CD4-positive, alpha-beta T cell (primary cell): ENCODE measurements at regions of chr14 and their contacts with region 1.

Region 1: DNA sequence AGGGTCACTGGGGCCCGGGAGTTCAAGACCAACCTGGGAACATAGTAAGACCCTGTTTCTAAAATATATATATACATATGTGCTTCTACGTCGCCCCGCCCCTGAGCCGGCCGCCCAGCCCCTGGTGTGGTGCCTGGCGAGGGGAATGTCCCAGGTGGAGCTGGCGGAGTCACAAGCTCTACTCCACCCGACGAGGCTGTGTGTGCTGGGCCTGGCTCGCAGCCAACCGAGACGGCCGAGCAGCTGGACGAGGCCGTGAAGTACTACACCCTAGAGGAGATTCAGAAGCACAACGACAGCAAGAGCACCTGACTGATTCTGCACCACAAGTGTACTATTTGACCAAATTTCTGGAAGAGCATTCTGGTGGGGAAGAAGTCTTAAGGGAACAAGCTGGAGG is 22.1 kb upstream of the ITPK1 start:
- DNase-seq: no peak
- ATAC-seq: no peak
- H3K4me3 ChIP-seq: no peak overlapping the region
- H3K4me3 Mint-ChIP-seq: no peak overlapping the region
- H3K27ac ChIP-seq: no peak overlapping the region
- H3K27ac Mint-ChIP-seq: no peak overlapping the region
- H3K4me1 ChIP-seq: no peaks in the 10 kb centered on the region
- H3K4me1 Mint-ChIP-seq: peaks cover 6% of the 10 kb centered on the region
- H3K27me3 ChIP-seq: no peaks in the 10 kb centered on the region
- H3K27me3 Mint-ChIP-seq: no peaks in the 10 kb centered on the region
- CTCF ChIP-seq: no peak

Region 2: DNA sequence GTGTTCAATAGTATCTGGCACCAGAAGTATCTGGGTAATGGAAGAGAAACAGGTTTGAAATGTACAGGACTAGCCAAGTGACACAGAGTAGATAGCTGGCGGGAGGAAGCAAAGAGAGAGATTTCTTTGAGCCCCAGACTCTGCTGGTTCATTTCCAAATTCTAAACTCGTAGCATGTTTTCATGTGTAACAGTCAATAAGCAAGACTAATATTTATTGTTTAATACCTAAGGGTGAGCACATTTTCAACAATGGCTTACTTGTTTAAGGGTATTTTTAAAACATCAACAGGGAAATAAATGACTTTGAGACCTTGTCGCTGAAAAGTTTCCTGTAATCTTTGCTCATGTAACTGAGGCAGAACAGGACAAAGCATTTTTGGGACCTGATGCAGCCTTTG is 1708.5 kb before region 1 on chr14:
- CTCF ChIA-PET with region 1: no interaction called
- POLR2A ChIA-PET with region 1: no interaction called
- intact Hi-C with region 1: no loop called
- DNase-seq: no peak
- ATAC-seq: no peak
- H3K4me3 ChIP-seq: no peak overlapping the region
- H3K4me3 Mint-ChIP-seq: no peak overlapping the region
- H3K27ac ChIP-seq: no peak overlapping the region
- H3K27ac Mint-ChIP-seq: no peak overlapping the region
- H3K4me1 ChIP-seq: peaks cover 7% of the 10 kb centered on the region
- H3K4me1 Mint-ChIP-seq: peaks cover 22% of the 10 kb centered on the region
- H3K27me3 ChIP-seq: no peaks in the 10 kb centered on the region
- H3K27me3 Mint-ChIP-seq: no peaks in the 10 kb centered on the region
- CTCF ChIP-seq: no peak

Region 3: DNA sequence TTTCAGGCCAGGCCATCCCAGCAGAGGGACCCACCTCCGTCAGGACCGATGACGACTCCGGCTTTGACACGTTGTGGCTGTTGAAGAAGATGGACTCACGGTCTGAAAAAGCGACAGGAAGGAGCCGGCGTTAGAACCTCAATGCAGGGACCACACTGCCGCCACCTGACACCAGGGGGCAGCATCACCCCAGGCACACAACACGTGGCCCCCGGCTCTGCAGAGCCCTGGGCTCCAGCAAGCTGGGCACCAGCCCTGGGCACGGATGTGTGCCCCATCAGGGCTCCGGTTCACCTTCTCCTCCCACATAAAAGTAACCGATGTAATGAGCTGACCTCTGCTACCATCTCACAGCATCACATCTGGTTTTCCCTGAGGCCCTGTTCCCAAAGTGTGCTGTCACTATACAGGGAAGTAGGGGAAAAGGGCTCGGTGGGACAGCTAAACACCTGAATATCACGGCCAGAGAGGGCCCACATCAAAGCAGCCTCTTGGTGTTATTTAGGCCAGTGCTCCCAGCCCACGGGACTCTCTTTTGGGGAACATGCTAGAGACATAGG is 185.9 kb before region 1 on chr14:
- CTCF ChIA-PET with region 1: interaction called, 7 read pairs
- POLR2A ChIA-PET with region 1: no interaction called
- intact Hi-C with region 1: loop called in 1 of 2 experiments (anchors 1 kb)
- DNase-seq: peak; percentile 57 to 87 (median 76)
- ATAC-seq: peak; percentile 97
- H3K4me3 ChIP-seq: no peak overlapping the region
- H3K4me3 Mint-ChIP-seq: no peak overlapping the region
- H3K27ac ChIP-seq: no peak overlapping the region
- H3K27ac Mint-ChIP-seq: no peak overlapping the region
- H3K4me1 ChIP-seq: peaks cover 8% of the 10 kb centered on the region
- H3K4me1 Mint-ChIP-seq: peaks cover 4% of the 10 kb centered on the region
- H3K27me3 ChIP-seq: no peaks in the 10 kb centered on the region
- H3K27me3 Mint-ChIP-seq: no peaks in the 10 kb centered on the region
- CTCF ChIP-seq: peak; percentile 91

Region 4: DNA sequence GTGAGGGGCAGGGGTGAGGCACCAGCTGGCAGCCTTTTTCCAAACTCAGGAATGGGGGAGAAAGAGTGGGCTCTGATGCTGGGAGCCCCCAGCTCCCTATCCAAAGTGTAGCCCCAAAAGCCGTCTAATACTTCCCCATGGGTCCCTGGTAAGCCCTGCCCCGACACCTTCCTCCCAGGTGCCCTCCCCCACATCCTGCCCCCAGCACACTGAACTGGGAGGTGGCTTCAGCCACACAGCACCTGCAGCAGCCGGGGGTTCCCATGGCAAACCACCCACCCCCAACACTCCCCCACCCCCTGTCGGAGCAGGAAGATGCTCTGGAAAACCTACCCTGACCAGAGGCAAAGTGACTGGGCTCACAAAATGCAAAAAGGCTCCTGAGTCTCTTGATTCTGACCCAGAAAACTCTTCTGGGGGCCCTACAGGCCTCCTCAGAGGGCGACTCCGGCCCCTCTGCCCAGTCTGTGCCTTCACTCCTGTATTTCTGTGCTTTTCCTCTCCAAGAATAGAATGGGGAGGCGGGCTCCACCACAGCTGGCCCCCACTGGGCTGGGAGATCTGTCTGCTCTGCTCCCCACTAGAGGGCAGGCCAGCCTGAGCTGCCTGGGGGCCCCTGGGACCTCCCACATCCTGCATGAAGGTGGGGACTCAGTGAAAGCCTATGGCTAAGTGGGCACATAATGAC is 103.7 kb before region 1 on chr14:
- CTCF ChIA-PET with region 1: interaction called, 3 read pairs
- POLR2A ChIA-PET with region 1: no interaction called
- intact Hi-C with region 1: loop called in 1 of 2 experiments (anchors 2 kb)
- DNase-seq: peak in 13 of 14 experiments; percentile 7 to 73 (median 28)
- ATAC-seq: peak; percentile 86
- H3K4me3 ChIP-seq: no peak overlapping the region
- H3K4me3 Mint-ChIP-seq: peak overlapping the region; percentile 11
- H3K27ac ChIP-seq: no peak overlapping the region
- H3K27ac Mint-ChIP-seq: peak overlapping the region; percentile 65
- H3K4me1 ChIP-seq: peaks cover 26% of the 10 kb centered on the region
- H3K4me1 Mint-ChIP-seq: peaks cover 22% of the 10 kb centered on the region
- H3K27me3 ChIP-seq: no peaks in the 10 kb centered on the region
- H3K27me3 Mint-ChIP-seq: no peaks in the 10 kb centered on the region
- CTCF ChIP-seq: peak; percentile 47

Region 5: DNA sequence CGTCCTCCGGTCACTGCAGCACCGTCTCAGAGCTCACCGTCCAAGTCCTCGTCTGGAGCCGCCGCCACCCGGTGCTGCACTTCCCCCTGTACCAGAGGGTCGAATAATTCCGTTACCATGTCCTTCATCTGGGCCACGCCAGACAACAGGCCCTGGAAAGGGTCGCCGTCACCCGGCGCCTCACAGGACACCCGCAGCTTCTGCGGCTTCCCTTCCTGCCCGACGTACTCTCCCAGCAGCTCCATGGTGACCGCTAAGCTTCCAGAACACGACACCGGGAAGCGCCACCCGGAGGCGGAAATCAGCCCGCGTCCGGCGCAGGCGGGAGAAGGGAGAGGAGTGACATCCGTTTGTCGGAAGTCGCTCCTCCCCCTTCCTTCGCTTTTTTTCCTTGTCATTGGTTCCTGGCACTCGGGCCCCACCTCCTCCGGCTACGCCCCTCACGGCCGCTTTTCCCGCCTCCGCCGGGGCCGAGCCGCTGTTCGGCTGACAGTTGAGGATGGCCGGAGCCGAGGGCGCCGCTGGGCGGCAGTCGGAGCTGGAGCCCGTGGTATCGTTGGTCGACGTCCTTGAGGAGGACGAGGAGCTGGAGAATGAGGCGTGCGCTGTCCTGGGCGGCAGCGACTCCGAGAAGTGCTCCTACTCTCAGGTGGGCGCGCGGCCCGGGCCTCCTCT is 69.1 kb after region 1 on chr14 and contains the starts of genes GON7 and UBR7:
- CTCF ChIA-PET with region 1: interaction called, 12 read pairs
- POLR2A ChIA-PET with region 1: no interaction called
- intact Hi-C with region 1: no loop called
- DNase-seq: peak; percentile 68 to 95 (median 82)
- ATAC-seq: peak; percentile 97
- H3K4me3 ChIP-seq: peak within 1 kb of the TSS; percentile 93
- H3K4me3 Mint-ChIP-seq: peak within 1 kb of the TSS; percentile 97
- H3K27ac ChIP-seq: peak within 1 kb of the TSS; percentile 56 to 75
- H3K27ac Mint-ChIP-seq: peak within 1 kb of the TSS; percentile 95
- H3K4me1 ChIP-seq: peaks cover 32% of the 10 kb centered on the region
- H3K4me1 Mint-ChIP-seq: peaks cover 52% of the 10 kb centered on the region
- H3K27me3 ChIP-seq: no peaks in the 10 kb centered on the region
- H3K27me3 Mint-ChIP-seq: no peaks in the 10 kb centered on the region
- CTCF ChIP-seq: peak; percentile 21
- total RNA-seq, gene GON7: 2.3 to 2.4 TPM
- total RNA-seq, gene UBR7: 6.8 to 7.4 TPM

Region 6: DNA sequence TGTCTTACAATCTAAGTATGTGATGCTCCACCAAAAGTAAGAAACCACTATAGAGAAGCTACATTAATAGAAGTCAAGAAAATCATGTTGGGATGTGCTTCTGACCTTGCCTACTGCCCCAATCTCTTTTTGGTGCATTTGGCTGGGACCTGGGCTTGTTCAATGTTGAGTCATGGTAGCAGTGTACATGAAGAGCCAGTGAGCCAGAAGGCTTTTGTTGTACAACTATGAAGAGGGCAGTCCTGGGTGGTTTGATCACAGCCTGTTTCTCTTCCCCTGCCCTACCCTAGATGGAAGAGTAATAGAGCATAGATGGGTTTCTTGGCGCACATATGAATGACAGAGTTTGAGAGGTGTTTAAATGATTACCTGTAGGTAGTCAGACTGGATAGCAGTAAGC is 125.6 kb after region 1 on chr14:
- CTCF ChIA-PET with region 1: no interaction called
- POLR2A ChIA-PET with region 1: no interaction called
- intact Hi-C with region 1: no loop called
- DNase-seq: no peak
- ATAC-seq: no peak
- H3K4me3 ChIP-seq: no peak overlapping the region
- H3K4me3 Mint-ChIP-seq: no peak overlapping the region
- H3K27ac ChIP-seq: no peak overlapping the region
- H3K27ac Mint-ChIP-seq: no peak overlapping the region
- H3K4me1 ChIP-seq: no peaks in the 10 kb centered on the region
- H3K4me1 Mint-ChIP-seq: peaks cover 30% of the 10 kb centered on the region
- H3K27me3 ChIP-seq: no peaks in the 10 kb centered on the region
- H3K27me3 Mint-ChIP-seq: no peaks in the 10 kb centered on the region
- CTCF ChIP-seq: no peak